ENCODE measurements at regions of chr11 and their contacts with region 1.

Region 1: DNA sequence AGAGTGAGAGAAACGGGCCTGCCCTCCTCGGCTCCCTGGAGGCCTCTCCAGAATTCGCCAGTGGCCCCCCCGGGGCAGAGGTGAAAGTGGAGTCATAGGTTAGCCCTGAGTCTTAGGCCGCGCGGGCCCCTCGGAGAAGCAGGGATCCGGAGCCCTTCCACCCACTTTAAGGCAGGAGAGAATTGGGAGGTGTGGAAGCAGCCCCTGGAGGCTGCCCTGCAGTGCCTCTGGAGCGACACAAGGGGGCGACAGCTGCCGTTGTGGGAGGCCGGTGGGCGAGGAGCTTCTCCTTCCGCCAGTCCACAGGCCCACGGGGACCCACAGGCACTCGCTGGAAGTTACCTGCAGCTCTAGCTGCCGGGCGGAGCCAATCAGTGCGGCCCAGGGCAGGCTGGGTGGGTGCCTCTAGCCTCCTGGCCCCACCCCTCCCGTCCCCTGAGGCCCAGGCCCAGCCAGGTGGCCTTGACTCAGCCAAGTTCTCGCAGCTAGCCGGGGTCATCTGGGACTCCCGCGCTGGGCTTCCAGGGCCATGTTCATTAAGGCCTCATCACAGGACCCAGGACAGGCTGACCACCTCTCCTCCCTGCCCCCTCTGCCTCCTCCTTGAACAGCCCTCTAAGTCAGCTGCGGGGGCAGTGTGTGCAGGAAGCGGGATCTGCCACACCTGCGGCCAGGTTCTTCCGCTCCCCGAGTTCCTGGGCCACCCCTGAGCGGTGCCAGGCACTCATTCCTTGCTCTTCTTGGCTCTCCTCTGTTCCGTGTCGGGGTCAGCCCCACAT is 5.0 kb downstream of the DGKZ start:
- DNase-seq: peak; percentile 86
- ATAC-seq: peak; percentile 77
- H3K4me3 Mint-ChIP-seq: peak overlapping the region; percentile 30
- H3K27ac Mint-ChIP-seq: peak overlapping the region; percentile 89
- H3K4me1 Mint-ChIP-seq: peaks cover 64% of the 10 kb centered on the region
- H3K27me3 Mint-ChIP-seq: no peaks in the 10 kb centered on the region
- CTCF ChIP-seq: peak; percentile 98

Region 2: DNA sequence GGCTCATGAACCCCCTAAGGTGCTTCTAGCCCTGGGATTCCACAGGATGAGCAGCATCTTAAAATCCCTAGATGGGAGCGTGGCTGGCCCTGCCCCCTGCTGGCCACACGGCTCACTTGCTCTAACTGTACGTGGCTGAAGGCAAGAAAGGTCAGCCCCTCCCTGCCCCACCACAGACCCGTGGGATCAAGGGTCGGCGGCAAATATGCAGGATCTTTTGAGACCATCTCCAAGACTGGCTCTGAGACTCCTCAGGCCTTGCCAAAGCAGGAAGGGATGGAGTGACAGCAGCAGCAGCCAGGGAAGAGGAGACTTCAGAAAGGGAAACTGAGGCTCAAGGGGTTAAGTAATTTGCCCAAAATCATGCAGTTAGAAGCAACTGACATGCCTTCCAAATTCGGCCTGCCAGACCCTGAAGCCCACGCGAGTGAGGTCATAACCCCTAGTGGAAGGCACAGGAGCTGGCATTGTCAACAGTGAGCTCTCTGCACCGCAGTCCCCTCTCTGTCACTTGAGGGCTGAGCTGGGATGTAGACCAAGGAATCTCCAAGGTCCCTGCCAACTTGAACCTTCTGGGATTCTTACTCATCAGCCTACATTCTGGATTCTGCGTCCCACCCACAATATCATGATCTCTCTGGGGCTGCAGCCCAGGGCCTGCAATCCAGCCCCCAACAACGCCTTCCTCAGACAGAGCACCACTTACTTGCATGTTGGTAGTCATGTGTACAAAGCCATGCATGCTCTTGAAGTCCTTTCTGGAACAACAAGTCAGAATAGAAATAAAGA is 43.4 kb before region 1 on chr11:
- CTCF ChIA-PET with region 1: interaction called, 12 read pairs
- POLR2A ChIA-PET with region 1: no interaction called
- DNase-seq: peak; percentile 87
- ATAC-seq: peak; percentile 85
- H3K4me3 Mint-ChIP-seq: no peak overlapping the region
- H3K27ac Mint-ChIP-seq: 0 out of 2 replicates have a peak overlapping the region, but pooled peaks have one; percentile 27
- H3K4me1 Mint-ChIP-seq: peaks cover 19% of the 10 kb centered on the region
- H3K27me3 Mint-ChIP-seq: no peaks in the 10 kb centered on the region; the same call in 1 of the 2 replicates
- CTCF ChIP-seq: peak; percentile 85

Region 3: DNA sequence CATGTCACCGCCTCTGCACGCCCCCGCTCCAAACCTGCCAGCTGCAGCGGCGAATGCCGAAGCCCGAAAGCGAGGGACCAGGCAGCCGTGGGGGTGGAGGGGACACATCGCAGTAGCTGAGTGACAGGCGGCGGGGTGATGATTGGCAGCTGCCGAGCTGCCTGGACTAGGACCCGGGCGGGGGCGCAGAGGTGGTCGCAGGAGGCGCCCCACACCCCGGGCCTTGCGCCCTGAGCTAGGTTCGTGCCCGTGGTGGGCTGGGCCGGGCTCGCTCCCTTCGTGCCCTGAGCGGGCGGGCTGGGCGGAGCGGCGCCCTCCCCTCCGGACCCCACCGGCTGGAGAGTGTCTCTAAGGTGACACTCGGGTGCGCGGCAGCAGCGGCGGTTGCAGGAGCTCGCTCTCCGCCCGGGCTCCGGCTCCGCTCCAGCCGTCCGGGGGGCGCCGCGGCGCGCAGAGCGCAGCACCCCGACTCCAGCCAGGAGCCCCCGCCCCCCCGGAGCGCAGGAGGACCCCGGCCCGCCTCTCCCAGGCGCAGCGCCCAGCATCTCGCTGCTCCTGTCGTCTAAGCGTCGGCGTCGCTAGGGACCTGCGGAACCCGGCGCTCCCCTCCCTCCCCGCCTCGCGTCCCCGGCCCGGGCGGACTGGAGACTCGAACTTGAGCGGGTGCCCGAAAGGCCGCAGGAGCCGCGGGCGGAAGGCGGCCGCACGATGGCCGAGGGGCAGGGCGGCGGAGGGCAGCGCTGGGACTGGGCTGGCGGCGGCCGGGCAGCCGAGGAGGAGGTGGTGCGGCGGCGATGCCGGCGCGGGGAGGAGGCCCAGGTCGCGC is 19.5 kb before region 1 on chr11:
- CTCF ChIA-PET with region 1: interaction called, 62 read pairs
- POLR2A ChIA-PET with region 1: no interaction called
- DNase-seq: peak; percentile 55
- ATAC-seq: peak; percentile 54
- H3K4me3 Mint-ChIP-seq: peak overlapping the region; percentile 69
- H3K27ac Mint-ChIP-seq: no peak overlapping the region
- H3K4me1 Mint-ChIP-seq: peaks cover 67% of the 10 kb centered on the region
- H3K27me3 Mint-ChIP-seq: peaks cover 56% of the 10 kb centered on the region
- CTCF ChIP-seq: no peak

Region 4: GRCh38 chr11:46338988-46339666 is 13.1 kb before region 1 on chr11:
- CTCF ChIA-PET with region 1: interaction called, 62 read pairs
- POLR2A ChIA-PET with region 1: interaction called, 5 read pairs
- DNase-seq: peak; percentile 83
- ATAC-seq: peak; percentile 89
- H3K4me3 Mint-ChIP-seq: peak overlapping the region; percentile 60
- H3K27ac Mint-ChIP-seq: peak overlapping the region; percentile 99
- H3K4me1 Mint-ChIP-seq: peaks cover 96% of the 10 kb centered on the region
- H3K27me3 Mint-ChIP-seq: peaks cover 9% of the 10 kb centered on the region
- CTCF ChIP-seq: no peak

Region 5: DNA sequence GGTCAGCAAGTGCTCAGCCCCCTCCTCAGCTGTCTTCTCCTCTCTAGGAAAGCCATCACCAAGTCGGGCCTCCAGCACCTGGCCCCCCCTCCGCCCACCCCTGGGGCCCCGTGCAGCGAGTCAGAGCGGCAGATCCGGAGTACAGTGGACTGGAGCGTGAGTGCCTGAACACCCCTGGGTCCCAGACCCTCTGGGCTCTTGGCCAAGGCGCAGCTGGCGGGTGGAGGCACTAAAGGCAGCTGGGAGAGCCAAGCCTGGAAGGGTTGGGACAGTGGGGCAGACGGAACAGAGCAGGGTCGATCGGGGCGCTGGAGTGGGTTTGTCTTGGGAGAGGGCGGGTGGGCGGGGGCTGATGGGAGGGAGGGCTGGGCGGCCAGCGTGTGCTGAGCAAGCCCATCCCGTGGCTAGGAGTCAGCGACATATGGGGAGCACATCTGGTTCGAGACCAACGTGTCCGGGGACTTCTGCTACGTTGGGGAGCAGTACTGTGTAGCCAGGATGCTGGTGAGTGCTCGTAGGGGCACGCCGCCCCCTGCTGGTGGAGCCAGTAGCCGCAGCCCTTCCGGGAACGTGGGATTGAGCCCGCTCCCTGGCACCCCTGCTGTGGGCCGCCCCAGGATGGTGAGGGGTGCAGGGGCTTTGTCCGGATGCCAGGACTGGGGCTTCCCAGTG is 15.1 kb after region 1 on chr11:
- CTCF ChIA-PET with region 1: interaction called, 231 read pairs
- POLR2A ChIA-PET with region 1: interaction called, 6 read pairs
- DNase-seq: peak; percentile 89
- ATAC-seq: peak; percentile 66
- H3K4me3 Mint-ChIP-seq: no peak overlapping the region
- H3K27ac Mint-ChIP-seq: no peak overlapping the region; the same call in 1 of the 2 replicates
- H3K4me1 Mint-ChIP-seq: peaks cover 26% of the 10 kb centered on the region
- H3K27me3 Mint-ChIP-seq: no peaks in the 10 kb centered on the region
- CTCF ChIP-seq: peak; percentile 96

Region 6: DNA sequence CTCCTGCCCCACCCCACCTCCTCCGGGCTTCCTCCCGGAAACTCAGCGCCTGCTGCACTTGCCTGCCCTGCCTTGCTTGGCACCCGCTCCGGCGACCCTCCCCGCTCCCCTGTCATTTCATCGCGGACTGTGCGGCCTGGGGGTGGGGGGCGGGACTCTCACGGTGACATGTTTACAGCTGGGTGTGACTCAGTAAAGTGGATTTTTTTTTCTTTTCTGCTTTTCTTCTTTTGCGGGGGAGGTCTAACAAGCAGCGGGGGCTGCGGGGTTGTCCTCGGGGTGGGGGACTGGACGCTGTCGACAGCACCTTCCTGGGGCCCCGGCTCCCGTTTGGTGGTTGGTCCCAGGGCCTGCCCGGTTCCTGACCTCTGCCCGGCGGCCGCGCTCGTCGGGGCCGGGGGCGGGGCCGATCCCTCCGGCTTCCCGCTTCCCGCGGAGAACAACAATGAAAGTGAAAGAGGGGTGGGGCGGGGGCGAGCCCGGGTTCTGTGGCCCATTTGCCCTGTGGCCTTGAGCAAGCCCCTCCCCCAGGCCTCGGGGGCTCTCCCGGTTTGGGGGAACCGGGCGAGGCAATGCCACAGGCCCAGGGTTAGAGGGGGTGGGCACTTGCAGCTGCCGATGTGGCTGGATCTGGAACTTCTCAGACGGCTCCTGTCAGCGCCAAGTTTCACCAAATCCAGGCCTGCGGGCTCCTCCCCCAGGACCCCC is 28.2 kb after region 1 on chr11:
- CTCF ChIA-PET with region 1: interaction called, 51 read pairs
- POLR2A ChIA-PET with region 1: interaction called, 3 read pairs
- DNase-seq: peak; percentile 91
- ATAC-seq: peak; percentile 38
- H3K4me3 Mint-ChIP-seq: peak overlapping the region; percentile 69
- H3K27ac Mint-ChIP-seq: peak overlapping the region; percentile 76
- H3K4me1 Mint-ChIP-seq: peaks cover 21% of the 10 kb centered on the region
- H3K27me3 Mint-ChIP-seq: no peaks in the 10 kb centered on the region
- CTCF ChIP-seq: no peak

Region 7: GRCh38 chr11:46457659-46458424 is 105.6 kb after region 1 on chr11:
- CTCF ChIA-PET with region 1: no interaction called
- POLR2A ChIA-PET with region 1: no interaction called
- DNase-seq: no peak
- ATAC-seq: no peak
- H3K4me3 Mint-ChIP-seq: no peak overlapping the region
- H3K27ac Mint-ChIP-seq: peak overlapping the region; percentile 30; the same call in 1 of the 2 replicates
- H3K4me1 Mint-ChIP-seq: peaks cover 38% of the 10 kb centered on the region
- H3K27me3 Mint-ChIP-seq: no peaks in the 10 kb centered on the region
- CTCF ChIP-seq: no peak

Measured in WTC11 (cell line).